ENCODE measurements at regions of chr13 and their contacts with region 1.

Region 1: DNA sequence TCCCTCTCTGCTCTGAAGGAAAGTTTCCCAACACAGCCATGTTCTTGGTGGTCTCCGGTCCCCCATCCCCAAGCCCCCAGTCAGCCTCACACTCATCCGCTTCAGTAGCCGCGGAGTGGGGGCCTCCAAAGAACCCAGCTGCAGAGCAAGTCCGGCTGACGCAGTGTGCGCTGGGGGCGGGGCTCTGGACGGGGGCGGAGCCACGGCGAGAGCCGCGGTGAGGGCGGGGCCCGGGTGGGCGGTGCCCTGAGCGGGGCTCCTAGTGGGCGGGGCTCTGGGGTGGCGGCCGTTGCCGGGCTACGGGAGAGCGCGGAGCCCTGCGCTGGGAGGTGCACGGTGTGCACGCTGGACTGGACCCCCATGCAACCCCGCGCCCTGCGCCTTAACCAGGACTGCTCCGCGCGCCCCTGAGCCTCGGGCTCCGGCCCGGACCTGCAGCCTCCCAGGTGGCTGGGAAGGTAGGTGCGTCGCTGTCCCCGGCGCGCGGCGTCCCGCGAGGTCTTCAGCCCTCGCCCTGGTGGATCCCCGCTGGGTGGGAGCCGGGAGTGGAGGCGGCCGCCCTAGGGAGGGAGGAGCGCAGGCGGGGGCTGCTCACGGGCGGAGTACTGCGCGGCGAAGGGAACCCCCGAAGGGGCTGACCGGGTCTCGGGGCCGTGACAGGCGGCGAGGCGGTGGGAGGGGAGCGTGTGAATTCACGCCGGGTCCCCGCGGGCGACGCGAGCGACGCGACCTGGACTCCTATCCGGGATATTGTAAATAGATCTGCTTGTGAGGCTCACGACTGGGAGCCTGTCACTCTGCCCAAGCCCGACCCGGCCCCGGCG is 9.1 kb downstream of the TNFRSF19 start:
- DNase-seq: peak; percentile 93 to 95
- ATAC-seq: peak; percentile 98 to 99 (median 99)
- H3K4me3 ChIP-seq: peak overlapping the region; percentile 54 to 98 (median 87)
- H3K27ac ChIP-seq: peak overlapping the region; percentile 72 to 97 (median 90)
- H3K4me1 ChIP-seq: peaks cover 0 to 65% (median 15%) of the 10 kb centered on the region in 9 donors
- H3K27me3 ChIP-seq: peaks cover 0 to 24% (median 0%) of the 10 kb centered on the region in 7 donors
- CTCF ChIP-seq: no peak

Region 2: DNA sequence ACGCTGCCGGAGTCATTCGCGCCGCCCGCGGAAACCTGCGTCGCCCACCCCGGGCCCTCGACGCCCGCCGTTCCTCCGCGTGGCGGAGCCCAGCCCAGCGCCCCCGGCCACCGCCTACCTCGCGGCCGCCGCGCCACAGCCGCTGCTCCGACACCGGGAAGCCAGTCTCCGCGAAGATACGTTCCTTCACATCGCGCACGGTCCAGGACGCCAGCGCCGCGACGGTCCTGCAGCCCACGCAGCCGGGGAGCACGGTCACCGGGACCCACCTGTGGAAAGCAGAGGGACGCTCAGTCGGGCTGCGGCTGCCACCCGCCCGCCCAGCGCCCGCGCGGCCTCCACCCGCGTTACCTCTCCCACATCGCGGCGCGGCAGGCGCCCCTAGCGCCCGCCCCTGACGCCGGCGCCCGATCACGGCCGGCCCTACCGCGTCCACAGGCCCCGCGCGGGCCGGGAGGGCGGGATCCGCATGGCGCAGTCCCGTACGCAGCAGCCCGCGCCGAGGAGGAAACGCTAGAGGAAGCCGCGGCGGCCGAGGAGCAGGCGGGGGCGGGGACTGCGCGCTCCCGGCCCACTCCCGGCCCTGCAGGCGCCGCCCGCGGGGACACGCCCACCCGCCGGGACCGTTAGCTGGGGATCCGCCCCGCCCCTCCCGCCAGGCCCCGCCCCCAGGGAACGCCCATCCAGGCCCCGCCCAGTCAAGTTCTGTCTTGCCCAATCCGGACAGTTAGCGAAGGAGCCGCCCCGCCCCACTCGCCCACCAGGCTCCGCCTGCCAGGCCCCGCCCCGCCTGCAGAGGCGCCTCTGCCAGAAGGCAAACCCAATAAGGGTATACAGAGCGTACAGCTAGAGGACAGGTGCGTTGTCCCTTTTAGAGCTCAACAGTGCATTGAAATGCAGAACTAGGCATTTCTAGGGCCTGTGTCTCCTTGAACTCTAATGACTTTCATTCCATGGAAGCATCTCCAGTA is 204.0 kb before region 1 on chr13:
- intact Hi-C with region 1: loop called in 1 of 10 experiments (anchors 2 kb)
- DNase-seq: peak; percentile 97 to 99
- ATAC-seq: peak; percentile 95 to 97 (median 96)
- H3K4me3 ChIP-seq: peak overlapping the region; percentile 69 to 90 (median 86)
- H3K27ac ChIP-seq: peak overlapping the region; percentile 60 to 95 (median 91)
- H3K4me1 ChIP-seq: peaks cover 7 to 73% (median 50%) of the 10 kb centered on the region in 9 donors
- H3K27me3 ChIP-seq: no peaks in the 10 kb centered on the region
- CTCF ChIP-seq: peak in 8 of 9 donors; percentile 11 to 49 (median 35)

Region 3: DNA sequence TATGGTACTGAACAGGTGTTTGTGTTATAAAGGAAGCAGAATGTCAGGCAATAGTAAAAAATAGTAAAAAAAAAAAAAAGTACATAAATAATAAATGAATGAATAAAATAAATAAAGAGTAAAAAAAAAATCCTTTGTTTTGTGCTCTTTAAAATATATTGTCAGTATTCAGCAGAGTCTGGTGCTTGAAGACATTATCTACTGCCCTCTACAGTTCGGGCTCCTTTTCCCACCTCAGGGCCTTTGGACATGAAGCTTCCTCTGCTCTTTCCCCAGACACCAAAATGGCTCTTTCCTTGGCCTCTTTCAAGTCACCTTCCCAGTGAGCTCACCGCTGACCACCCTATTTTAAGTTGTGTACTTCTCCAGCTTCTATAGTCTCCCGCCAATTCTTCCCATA is 128.4 kb after region 1 on chr13:
- intact Hi-C with region 1: loop called in 2 of 10 experiments (anchors 5 to 10 kb)
- DNase-seq: no peak
- ATAC-seq: no peak
- H3K4me3 ChIP-seq: no peak overlapping the region
- H3K27ac ChIP-seq: no peak overlapping the region
- H3K4me1 ChIP-seq: peaks cover 0 to 25% (median 13%) of the 10 kb centered on the region in 9 donors
- H3K27me3 ChIP-seq: no peaks in the 10 kb centered on the region
- CTCF ChIP-seq: peak in 6 of 9 donors; percentile 23 to 40 (median 33)

Measured in heart right ventricle (tissue), 16 donors.